Naive thymus-derived CD4-positive, alpha-beta T cell (primary cell): ENCODE measurements at regions of chr2 and their contacts with region 1.

Region 1: GRCh38 chr2:192162392-192163042 is 32.2 kb downstream of the TMEFF2 start:
- DNase-seq: peak; percentile 7 to 70 (median 57)
- ATAC-seq: peak; percentile 82
- H3K4me3 ChIP-seq: no peak overlapping the region
- H3K4me3 Mint-ChIP-seq: peak overlapping the region in 7 of 10 donors; percentile 31 to 56 (median 44)
- H3K27ac ChIP-seq: no peak overlapping the region
- H3K27ac Mint-ChIP-seq: no peak overlapping the region
- H3K4me1 ChIP-seq: peaks cover 0 to 9% of the 10 kb centered on the region in 2 donors
- H3K4me1 Mint-ChIP-seq: peaks cover 8 to 22% (median 13%) of the 10 kb centered on the region in 7 donors
- H3K27me3 ChIP-seq: no peaks in the 10 kb centered on the region
- H3K27me3 Mint-ChIP-seq: peaks cover 8 to 18% (median 12%) of the 10 kb centered on the region in 5 donors

Region 2: DNA sequence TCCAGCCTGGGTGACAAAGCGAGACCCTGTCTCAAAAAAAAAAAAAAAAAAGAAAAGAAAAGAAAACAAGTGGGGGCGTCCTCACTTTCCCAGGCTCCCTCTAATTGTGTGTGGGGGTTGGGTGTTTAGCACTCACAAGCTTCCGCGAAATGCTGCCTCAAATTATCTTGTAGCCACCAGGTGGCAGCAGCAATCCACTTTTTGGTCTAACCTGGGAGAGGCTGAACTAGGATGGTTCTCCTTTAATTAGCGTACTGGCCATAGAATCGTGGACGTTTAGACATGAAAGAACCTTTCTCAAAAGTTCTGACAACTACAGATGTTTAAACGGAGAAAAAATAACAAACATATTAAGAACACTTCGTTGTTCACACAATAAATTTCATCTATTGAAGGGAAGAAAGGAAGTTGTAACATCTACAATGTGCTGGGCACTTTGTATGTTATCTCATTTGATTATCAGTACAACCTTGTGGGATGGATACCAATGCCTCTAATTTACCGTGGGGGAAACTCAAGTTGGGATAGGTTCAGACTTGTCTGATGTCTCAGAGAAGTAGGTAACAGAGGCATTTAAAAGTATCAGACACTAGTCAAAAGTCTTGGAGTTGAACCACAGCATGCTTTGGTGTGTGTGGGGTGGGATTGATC is 607.3 kb before region 1 on chr2:
- CTCF ChIA-PET with region 1: interaction called, 76 read pairs
- POLR2A ChIA-PET with region 1: no interaction called
- intact Hi-C with region 1: loop called (anchors 1 kb)
- DNase-seq: peak; percentile 40 to 78 (median 66)
- ATAC-seq: peak; percentile 89
- H3K4me3 ChIP-seq: no peak overlapping the region
- H3K4me3 Mint-ChIP-seq: peak overlapping the region in 4 of 10 donors; percentile 23 to 64 (median 43)
- H3K27ac ChIP-seq: no peak overlapping the region
- H3K27ac Mint-ChIP-seq: no peak overlapping the region
- H3K4me1 ChIP-seq: no peaks in the 10 kb centered on the region
- H3K4me1 Mint-ChIP-seq: peaks cover 0 to 5% (median 3%) of the 10 kb centered on the region in 7 donors
- H3K27me3 ChIP-seq: no peaks in the 10 kb centered on the region
- H3K27me3 Mint-ChIP-seq: peaks cover 13 to 34% (median 18%) of the 10 kb centered on the region in 5 donors

Region 3: DNA sequence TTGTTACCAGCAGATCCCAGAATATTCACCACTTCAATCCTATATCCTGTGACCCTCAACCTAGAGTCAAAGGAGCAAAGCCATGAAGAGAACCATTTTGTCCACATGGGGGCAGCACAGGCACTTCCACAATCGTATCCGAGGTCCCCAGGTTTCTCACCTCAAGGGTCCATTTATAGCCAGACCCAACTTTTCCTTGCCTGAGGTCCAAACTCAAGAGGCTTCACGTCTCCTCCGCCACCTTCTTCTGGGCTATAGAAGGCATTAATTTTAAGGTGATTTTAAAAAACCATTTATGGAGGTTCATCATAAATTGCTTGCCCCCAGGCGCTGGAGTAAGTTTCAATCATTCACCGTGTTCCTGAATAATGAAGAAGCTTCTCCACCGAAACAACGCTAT is 596.2 kb before region 1 on chr2:
- CTCF ChIA-PET with region 1: interaction called, 10 read pairs
- POLR2A ChIA-PET with region 1: interaction called, 4 read pairs
- intact Hi-C with region 1: loop called (anchors 1 kb)
- DNase-seq: peak; percentile 16 to 64 (median 42)
- ATAC-seq: peak; percentile 72
- H3K4me3 ChIP-seq: no peak overlapping the region
- H3K4me3 Mint-ChIP-seq: no peak overlapping the region
- H3K27ac ChIP-seq: no peak overlapping the region
- H3K27ac Mint-ChIP-seq: no peak overlapping the region
- H3K4me1 ChIP-seq: peaks cover 8 to 14% of the 10 kb centered on the region in 2 donors
- H3K4me1 Mint-ChIP-seq: peaks cover 14 to 34% (median 22%) of the 10 kb centered on the region in 7 donors
- H3K27me3 ChIP-seq: peaks cover 0 to 7% of the 10 kb centered on the region in 2 donors
- H3K27me3 Mint-ChIP-seq: peaks cover 4 to 69% (median 13%) of the 10 kb centered on the region in 5 donors

Region 4: GRCh38 chr2:191758518-191759507 is 403.7 kb before region 1 on chr2:
- CTCF ChIA-PET with region 1: interaction called, 3 read pairs
- POLR2A ChIA-PET with region 1: no interaction called
- intact Hi-C with region 1: loop called in 1 of 2 experiments (anchors 1 kb)
- DNase-seq: peak in 8 of 9 donors; percentile 4 to 29 (median 18)
- ATAC-seq: peak; percentile 99
- H3K4me3 ChIP-seq: no peak overlapping the region
- H3K4me3 Mint-ChIP-seq: no peak overlapping the region
- H3K27ac ChIP-seq: no peak overlapping the region
- H3K27ac Mint-ChIP-seq: no peak overlapping the region
- H3K4me1 ChIP-seq: no peaks in the 10 kb centered on the region
- H3K4me1 Mint-ChIP-seq: peaks cover 0 to 6% (median 4%) of the 10 kb centered on the region in 7 donors
- H3K27me3 ChIP-seq: peaks cover 0 to 5% of the 10 kb centered on the region in 2 donors
- H3K27me3 Mint-ChIP-seq: peaks cover 10 to 21% (median 16%) of the 10 kb centered on the region in 5 donors